ENCODE measurements at regions of chr2 and their contacts with region 1.

Region 1: DNA sequence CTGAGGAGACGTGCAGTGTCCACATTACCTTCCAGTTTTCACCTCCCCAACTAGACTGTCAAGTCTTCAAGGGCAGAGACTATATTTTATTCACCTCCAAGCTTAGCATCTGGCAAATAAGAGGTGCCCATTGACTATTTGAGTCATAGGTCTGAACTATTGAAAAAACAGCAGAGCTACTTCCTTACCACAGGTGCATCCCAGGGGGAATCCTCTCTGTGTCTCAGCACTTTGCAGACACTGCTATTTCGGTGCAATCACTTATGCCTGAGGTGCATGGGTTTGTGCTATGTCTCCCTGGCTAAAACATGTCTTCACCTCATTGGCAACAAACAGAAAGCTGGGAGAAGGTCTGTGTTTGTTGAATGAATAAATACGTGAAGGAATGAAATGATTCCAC is 67.8 kb downstream of the SOX11 start:
- DNase-seq: no peak
- H3K4me3 ChIP-seq: no peak overlapping the region
- H3K27ac ChIP-seq: no peak overlapping the region
- H3K4me1 ChIP-seq: no peaks in the 10 kb centered on the region; a peak in 1 of 4 replicates
- H3K27me3 ChIP-seq: no peaks in the 10 kb centered on the region
- CTCF ChIP-seq: no peak
- EP300 ChIP-seq: no peak
- RAD21 ChIP-seq: no peak

Region 2: GRCh38 chr2:5749347-5749746 is 10.6 kb before region 1 on chr2:
- CTCF ChIA-PET with region 1: interaction called, 13 read pairs
- POLR2A ChIA-PET with region 1: no interaction called
- DNase-seq: no peak
- H3K4me3 ChIP-seq: no peak overlapping the region
- H3K27ac ChIP-seq: no peak overlapping the region
- H3K4me1 ChIP-seq: no peaks in the 10 kb centered on the region
- H3K27me3 ChIP-seq: no peaks in the 10 kb centered on the region
- CTCF ChIP-seq: no peak
- EP300 ChIP-seq: no peak
- RAD21 ChIP-seq: no peak

Measured in SK-N-SH (cell line).